Mammary epithelial cell (primary cell): ENCODE measurements at regions of chrX and their contacts with region 1.

Region 1: DNA sequence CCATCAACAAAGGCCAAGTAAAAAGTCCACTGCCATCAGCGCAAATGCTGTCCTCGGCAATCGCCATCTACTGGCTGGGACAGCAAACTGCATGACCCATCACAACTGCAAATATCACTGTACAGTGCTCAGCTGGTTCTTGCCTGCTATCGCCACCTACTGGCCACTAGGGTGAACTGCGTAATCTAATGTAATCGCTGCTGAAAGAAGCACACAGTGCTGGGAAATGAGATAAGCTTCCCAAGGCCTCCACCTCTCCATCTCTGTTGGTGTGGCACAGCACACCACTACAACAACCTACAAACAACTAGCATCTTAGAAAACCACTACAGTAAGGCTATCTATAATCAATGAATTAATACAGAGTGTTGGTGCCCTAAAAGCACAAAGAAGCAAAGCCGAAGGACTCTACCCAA is 298.3 kb downstream of the TEX13A start:
- DNase-seq: peak; percentile 58
- H3K4me3 ChIP-seq: no peak overlapping the region
- H3K27ac ChIP-seq: no peak overlapping the region
- H3K4me1 ChIP-seq: no peaks in the 10 kb centered on the region
- H3K27me3 ChIP-seq: peaks cover 5% of the 10 kb centered on the region
- CTCF ChIP-seq: peak; percentile 97 to 100

Region 2: GRCh38 chrX:104565791-104566680 is 356.2 kb before region 1 on chrX and contains the start of gene IL1RAPL2:
- CTCF ChIA-PET with region 1: interaction called, 7 read pairs
- dilution Hi-C with region 1: no loop called
- in situ Hi-C with region 1: no loop called
- intact Hi-C with region 1: loop called (anchors 1 kb)
- DNase-seq: peak; percentile 58
- H3K4me3 ChIP-seq: peak within 1 kb of the TSS; percentile 46 to 55 (median 53)
- H3K27ac ChIP-seq: no peak within 1 kb of the TSS
- H3K4me1 ChIP-seq: peaks cover 3% of the 10 kb centered on the region
- H3K27me3 ChIP-seq: peaks cover 4% of the 10 kb centered on the region
- CTCF ChIP-seq: peak; percentile 64 to 84
- total RNA-seq, gene IL1RAPL2: 0.19 to 0.50 TPM

Region 3: GRCh38 chrX:104668550-104668949 is 253.7 kb before region 1 on chrX:
- CTCF ChIA-PET with region 1: interaction called, 10 read pairs
- dilution Hi-C with region 1: no loop called
- in situ Hi-C with region 1: no loop called
- intact Hi-C with region 1: loop called (anchors 1 kb)
- DNase-seq: peak; percentile 14
- H3K4me3 ChIP-seq: no peak overlapping the region
- H3K27ac ChIP-seq: no peak overlapping the region
- H3K4me1 ChIP-seq: no peaks in the 10 kb centered on the region
- H3K27me3 ChIP-seq: peaks cover 3% of the 10 kb centered on the region
- CTCF ChIP-seq: peak in 1 of 2 donors; percentile 42

Region 4: DNA sequence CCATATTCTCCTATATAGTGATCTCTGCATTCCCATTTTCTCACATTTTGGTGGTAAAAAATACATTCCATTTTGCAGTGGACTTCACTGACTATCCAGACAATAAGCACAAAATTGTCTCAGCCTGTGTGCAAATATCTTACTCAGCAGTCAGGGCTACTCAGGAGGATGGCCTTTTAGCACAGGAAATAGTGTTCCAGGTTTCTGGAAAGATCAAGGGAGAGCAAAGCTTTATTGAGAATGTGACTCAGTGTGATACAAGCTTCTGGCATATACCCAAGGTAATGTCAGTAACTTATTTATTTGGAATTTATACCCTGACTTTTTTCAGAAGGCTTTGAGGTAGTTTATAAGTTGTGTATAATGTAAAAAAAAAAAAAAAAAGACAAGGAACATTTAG is 64.8 kb after region 1 on chrX:
- CTCF ChIA-PET with region 1: no interaction called
- dilution Hi-C with region 1: no loop called
- in situ Hi-C with region 1: no loop called
- intact Hi-C with region 1: no loop called
- DNase-seq: peak; percentile 45
- H3K4me3 ChIP-seq: no peak overlapping the region
- H3K27ac ChIP-seq: no peak overlapping the region
- H3K4me1 ChIP-seq: no peaks in the 10 kb centered on the region
- H3K27me3 ChIP-seq: no peaks in the 10 kb centered on the region
- CTCF ChIP-seq: no peak

Region 5: DNA sequence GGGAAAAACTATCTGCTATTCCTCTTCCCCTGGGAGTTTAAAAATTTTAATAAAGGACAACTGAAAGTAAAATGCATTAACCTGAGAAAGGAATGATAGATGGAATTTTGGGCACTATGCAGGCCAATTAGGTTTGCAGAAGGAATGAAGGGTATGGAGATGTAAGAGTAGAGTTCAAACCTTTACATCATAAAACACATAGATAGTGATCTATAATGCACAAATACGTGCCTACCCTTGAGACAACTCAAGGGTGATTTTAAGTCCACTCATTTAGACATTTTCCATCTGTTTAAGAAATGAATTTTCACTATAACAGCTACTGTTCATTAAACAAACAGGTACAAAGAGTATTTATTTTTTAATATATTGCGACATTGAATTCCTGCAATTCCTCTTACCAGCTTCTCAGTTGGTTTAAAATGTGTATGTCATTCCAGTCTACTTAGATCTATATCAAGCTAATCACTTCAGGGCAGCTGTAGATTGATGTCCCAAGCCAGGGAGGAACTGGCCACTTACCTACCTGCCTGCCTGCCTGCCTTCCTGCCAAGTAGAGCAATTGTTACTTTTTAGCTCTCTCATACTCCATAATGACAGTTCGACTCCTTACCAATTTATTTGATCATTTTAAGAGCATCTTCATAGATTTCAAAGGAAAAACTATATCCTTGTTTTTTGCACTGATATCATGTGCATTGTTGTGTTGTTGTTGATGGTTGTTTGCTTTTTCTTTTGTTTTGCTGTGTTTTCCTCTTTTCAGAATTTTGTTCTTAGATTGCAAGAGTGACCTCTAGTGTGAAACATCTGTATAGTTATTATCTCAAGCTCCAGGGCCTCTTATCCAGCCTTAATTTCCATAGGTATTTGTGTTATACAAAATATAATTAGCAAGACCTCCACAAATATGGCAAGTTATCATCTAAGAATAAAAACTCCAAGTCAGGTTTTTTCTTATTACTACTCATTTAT is 779.2 kb after region 1 on chrX:
- CTCF ChIA-PET with region 1: no interaction called
- dilution Hi-C with region 1: no loop called
- in situ Hi-C with region 1: no loop called
- intact Hi-C with region 1: loop called (anchors 10 kb)
- DNase-seq: peak; percentile 21
- H3K4me3 ChIP-seq: no peak overlapping the region
- H3K27ac ChIP-seq: no peak overlapping the region
- H3K4me1 ChIP-seq: peaks cover 7% of the 10 kb centered on the region
- H3K27me3 ChIP-seq: no peaks in the 10 kb centered on the region
- CTCF ChIP-seq: peak; percentile 13 to 44